ENCODE measurements at regions of chr10 and their contacts with region 1.

Region 1: GRCh38 chr10:24929056-24929544 is 23.3 kb downstream of the PRTFDC1 start:
- DNase-seq: no peak
- ATAC-seq: no peak
- H3K4me3 ChIP-seq: no peak overlapping the region
- H3K4me3 Mint-ChIP-seq: no peak overlapping the region
- H3K27ac ChIP-seq: no peak overlapping the region
- H3K27ac Mint-ChIP-seq: no peak overlapping the region
- H3K4me1 ChIP-seq: peaks cover 4 to 7% of the 10 kb centered on the region in 2 donors
- H3K4me1 Mint-ChIP-seq: peaks cover 18% of the 10 kb centered on the region
- H3K27me3 ChIP-seq: no peaks in the 10 kb centered on the region
- H3K27me3 Mint-ChIP-seq: no peaks in the 10 kb centered on the region
- CTCF ChIP-seq: no peak

Region 2: DNA sequence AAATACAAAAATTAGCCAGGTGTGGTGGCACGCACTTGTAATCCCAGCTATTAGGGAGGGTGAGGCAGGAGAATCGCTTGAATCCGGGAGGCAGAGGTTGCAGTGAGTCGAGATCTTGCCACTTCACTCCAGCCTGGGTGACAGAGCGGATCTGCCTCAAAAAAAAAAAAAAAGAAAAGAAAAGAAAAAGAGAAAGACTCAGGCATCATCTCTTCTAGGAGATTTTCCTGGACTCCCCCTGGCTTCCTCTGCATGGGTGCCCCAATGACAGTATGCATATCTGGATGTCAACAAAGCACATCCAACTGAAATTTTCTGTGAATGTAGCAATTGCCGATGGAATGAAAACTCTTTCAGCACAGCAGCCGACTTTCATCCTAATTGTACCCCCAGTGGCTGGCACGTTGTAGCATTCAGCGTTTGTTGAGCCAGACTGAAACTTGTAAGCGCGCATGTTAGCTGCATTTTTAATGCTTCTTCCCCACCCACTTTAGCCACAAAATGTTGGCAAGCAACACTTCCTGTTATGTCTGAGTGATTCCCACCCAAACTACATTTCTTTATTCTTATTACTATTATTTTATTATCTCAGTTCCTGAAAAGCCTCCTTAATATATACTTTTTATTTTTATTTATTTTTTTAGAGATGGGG is 46.9 kb before region 1 on chr10:
- CTCF ChIA-PET with region 1: no interaction called
- POLR2A ChIA-PET with region 1: interaction called, 10 read pairs
- intact Hi-C with region 1: no loop called
- DNase-seq: peak; percentile 43
- ATAC-seq: peak; percentile 57
- H3K4me3 ChIP-seq: peak overlapping the region in 2 of 5 experiments; percentile 36 to 46
- H3K4me3 Mint-ChIP-seq: peak overlapping the region; percentile 76
- H3K27ac ChIP-seq: no peak overlapping the region
- H3K27ac Mint-ChIP-seq: peak overlapping the region; percentile 68
- H3K4me1 ChIP-seq: peaks cover 15 to 40% of the 10 kb centered on the region in 2 donors
- H3K4me1 Mint-ChIP-seq: peaks cover 36% of the 10 kb centered on the region
- H3K27me3 ChIP-seq: no peaks in the 10 kb centered on the region
- H3K27me3 Mint-ChIP-seq: no peaks in the 10 kb centered on the region
- CTCF ChIP-seq: no peak

Measured in B cell (primary cell).